IMR-90 (cell line): ENCODE measurements at regions of chr9 and their contacts with region 1.

Region 1: GRCh38 chr9:124126571-124127289 is 115.2 kb downstream of the LHX2 start:
- DNase-seq: peak; percentile 65
- ATAC-seq: peak; percentile 74
- H3K4me3 ChIP-seq: no peak overlapping the region
- H3K27ac ChIP-seq: no peak overlapping the region
- H3K4me1 ChIP-seq: peaks cover 4% of the 10 kb centered on the region; the same call in 1 of the 2 replicates
- H3K27me3 ChIP-seq: peaks cover 7% of the 10 kb centered on the region
- CTCF ChIP-seq: peak; percentile 84
- POLR2A ChIP-seq: no peak
- RAD21 ChIP-seq: peak; percentile 92

Region 2: GRCh38 chr9:123960366-123960765 is 166.4 kb before region 1 on chr9:
- CTCF ChIA-PET with region 1: no interaction called
- POLR2A ChIA-PET with region 1: no interaction called
- dilution Hi-C with region 1: no loop called
- in situ Hi-C with region 1: no loop called
- intact Hi-C with region 1: no loop called
- DNase-seq: no peak
- ATAC-seq: no peak
- H3K4me3 ChIP-seq: no peak overlapping the region
- H3K27ac ChIP-seq: no peak overlapping the region
- H3K4me1 ChIP-seq: no peaks in the 10 kb centered on the region
- H3K27me3 ChIP-seq: peaks cover 49% of the 10 kb centered on the region
- CTCF ChIP-seq: no peak
- POLR2A ChIP-seq: no peak
- RAD21 ChIP-seq: no peak

Region 3: GRCh38 chr9:124320062-124320973 is 193.6 kb after region 1 on chr9:
- CTCF ChIA-PET with region 1: no interaction called
- POLR2A ChIA-PET with region 1: no interaction called
- dilution Hi-C with region 1: no loop called
- in situ Hi-C with region 1: loop called (anchors 5 kb)
- intact Hi-C with region 1: loop called (anchors 1 kb)
- DNase-seq: peak; percentile 60
- ATAC-seq: peak; percentile 96
- H3K4me3 ChIP-seq: no peak overlapping the region
- H3K27ac ChIP-seq: peak overlapping the region; percentile 36
- H3K4me1 ChIP-seq: peaks cover 6% of the 10 kb centered on the region; the same call in 1 of the 2 replicates
- H3K27me3 ChIP-seq: no peaks in the 10 kb centered on the region
- CTCF ChIP-seq: peak; percentile 83
- POLR2A ChIP-seq: no peak
- RAD21 ChIP-seq: peak; percentile 82

Region 4: GRCh38 chr9:124342776-124343485 is 216.2 kb after region 1 on chr9:
- CTCF ChIA-PET with region 1: no interaction called
- POLR2A ChIA-PET with region 1: no interaction called
- dilution Hi-C with region 1: no loop called
- in situ Hi-C with region 1: no loop called
- intact Hi-C with region 1: loop called (anchors 2 kb)
- DNase-seq: peak; percentile 94
- ATAC-seq: peak; percentile 87
- H3K4me3 ChIP-seq: no peak overlapping the region
- H3K27ac ChIP-seq: peak overlapping the region; percentile 91
- H3K4me1 ChIP-seq: peaks cover 20% of the 10 kb centered on the region
- H3K27me3 ChIP-seq: no peaks in the 10 kb centered on the region
- CTCF ChIP-seq: no peak
- POLR2A ChIP-seq: peak; percentile 37; the same call in 1 of the 2 replicates
- RAD21 ChIP-seq: peak; percentile 18; the same call in 1 of the 2 replicates

Region 5: DNA sequence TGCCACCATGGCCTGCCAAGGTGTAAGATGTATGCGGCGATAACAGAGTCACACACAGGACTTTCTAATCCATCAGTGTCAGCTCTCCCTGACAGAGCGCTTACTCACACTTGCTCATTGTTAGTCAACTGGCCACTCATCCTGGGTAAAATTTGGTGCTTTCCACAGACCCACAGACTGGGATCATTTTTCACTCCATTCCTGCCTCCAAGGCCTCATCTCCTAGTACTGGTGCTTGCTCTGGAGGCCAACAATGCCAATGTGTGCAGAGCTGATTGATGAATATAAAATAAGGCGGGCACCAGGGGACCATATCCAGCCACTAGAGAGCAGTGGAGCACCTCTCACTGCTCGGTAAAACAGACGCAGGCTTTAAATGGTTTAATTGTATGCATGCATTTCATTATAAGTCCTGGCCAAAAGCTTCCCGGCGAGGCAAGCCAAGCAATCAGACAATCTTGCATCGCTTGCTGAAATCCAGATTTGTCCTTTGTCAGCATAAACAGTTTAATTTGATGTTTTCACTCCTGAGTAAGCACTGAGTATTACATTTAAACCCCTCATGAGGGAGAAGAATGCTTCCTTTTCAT is 266.2 kb after region 1 on chr9:
- CTCF ChIA-PET with region 1: no interaction called
- POLR2A ChIA-PET with region 1: no interaction called
- dilution Hi-C with region 1: no loop called
- in situ Hi-C with region 1: no loop called
- intact Hi-C with region 1: loop called (anchors 2 kb)
- DNase-seq: peak; percentile 95
- ATAC-seq: peak; percentile 76
- H3K4me3 ChIP-seq: no peak overlapping the region
- H3K27ac ChIP-seq: no peak overlapping the region; the same call in 1 of the 2 replicates
- H3K4me1 ChIP-seq: peaks cover 38% of the 10 kb centered on the region
- H3K27me3 ChIP-seq: no peaks in the 10 kb centered on the region
- CTCF ChIP-seq: peak; percentile 68
- POLR2A ChIP-seq: no peak
- RAD21 ChIP-seq: peak; percentile 58

Region 6: GRCh38 chr9:124537926-124538325 is 411.2 kb after region 1 on chr9:
- CTCF ChIA-PET with region 1: no interaction called
- POLR2A ChIA-PET with region 1: no interaction called
- dilution Hi-C with region 1: no loop called
- in situ Hi-C with region 1: no loop called
- intact Hi-C with region 1: loop called (anchors 5 kb)
- DNase-seq: no peak
- ATAC-seq: no peak
- H3K4me3 ChIP-seq: no peak overlapping the region
- H3K27ac ChIP-seq: no peak overlapping the region
- H3K4me1 ChIP-seq: no peaks in the 10 kb centered on the region
- H3K27me3 ChIP-seq: peaks cover 10% of the 10 kb centered on the region
- CTCF ChIP-seq: no peak
- POLR2A ChIP-seq: no peak
- RAD21 ChIP-seq: no peak